ENCODE measurements at regions of chr2 and their contacts with region 1.

Region 1: GRCh38 chr2:101518578-101519492 is 43.9 kb upstream of the RFX8 start:
- DNase-seq: peak; percentile 69
- H3K4me3 Mint-ChIP-seq: peak overlapping the region; percentile 35
- H3K27ac Mint-ChIP-seq: peak overlapping the region; percentile 89
- H3K4me1 Mint-ChIP-seq: peaks cover 53% of the 10 kb centered on the region
- H3K27me3 Mint-ChIP-seq: no peaks in the 10 kb centered on the region
- CTCF ChIP-seq: peak; percentile 29

Region 2: DNA sequence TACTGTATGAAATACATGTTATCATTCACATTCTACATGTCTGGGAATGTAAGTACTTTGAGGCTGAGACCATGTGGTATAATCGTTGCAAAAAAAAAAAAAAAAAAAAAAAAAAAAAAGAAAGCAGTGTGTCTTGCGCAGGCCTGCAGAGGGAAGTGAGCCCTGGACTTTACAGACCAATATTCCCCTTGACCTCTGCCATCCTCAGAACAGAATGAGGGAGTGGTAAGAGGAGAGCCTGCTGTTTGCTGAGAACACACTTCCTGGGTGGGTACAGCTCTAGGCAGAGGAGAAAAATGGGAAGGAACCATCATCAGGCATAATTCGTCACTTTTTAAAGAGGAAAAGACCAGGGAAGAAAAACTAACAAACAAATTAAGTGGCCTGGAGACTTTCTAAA is 338.9 kb before region 1 on chr2:
- CTCF ChIA-PET with region 1: no interaction called
- intact Hi-C with region 1: no loop called
- DNase-seq: no peak
- H3K4me3 Mint-ChIP-seq: no peak overlapping the region
- H3K27ac Mint-ChIP-seq: no peak overlapping the region
- H3K4me1 Mint-ChIP-seq: peaks cover 8% of the 10 kb centered on the region
- H3K27me3 Mint-ChIP-seq: no peaks in the 10 kb centered on the region
- CTCF ChIP-seq: no peak

Region 3: GRCh38 chr2:101419096-101419663 is 99.7 kb before region 1 on chr2:
- CTCF ChIA-PET with region 1: no interaction called
- intact Hi-C with region 1: loop called (anchors 1 kb)
- DNase-seq: peak; percentile 67
- H3K4me3 Mint-ChIP-seq: no peak overlapping the region
- H3K27ac Mint-ChIP-seq: no peak overlapping the region
- H3K4me1 Mint-ChIP-seq: no peaks in the 10 kb centered on the region
- H3K27me3 Mint-ChIP-seq: no peaks in the 10 kb centered on the region
- CTCF ChIP-seq: peak; percentile 61

Region 4: DNA sequence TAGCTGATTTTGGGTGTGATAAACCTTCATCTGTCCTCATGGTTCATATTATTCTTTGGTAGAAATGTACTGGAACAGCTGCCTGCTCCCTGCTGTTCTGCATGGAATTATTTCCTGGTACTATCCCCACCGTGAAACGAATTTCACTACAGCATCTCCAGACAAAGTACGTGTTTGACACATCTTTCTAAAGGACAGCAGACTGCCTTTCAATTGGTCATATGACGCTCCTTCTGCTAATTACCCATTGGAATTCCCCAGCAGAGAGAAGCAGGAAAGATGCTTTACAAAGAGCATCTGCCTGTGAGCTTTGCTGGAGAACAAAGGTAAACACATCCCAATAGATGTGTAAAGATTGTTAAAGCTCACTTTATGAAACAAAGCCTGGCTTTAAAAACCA is 39.5 kb before region 1 on chr2:
- CTCF ChIA-PET with region 1: no interaction called
- intact Hi-C with region 1: no loop called
- DNase-seq: no peak
- H3K4me3 Mint-ChIP-seq: no peak overlapping the region
- H3K27ac Mint-ChIP-seq: no peak overlapping the region
- H3K4me1 Mint-ChIP-seq: no peaks in the 10 kb centered on the region
- H3K27me3 Mint-ChIP-seq: no peaks in the 10 kb centered on the region
- CTCF ChIP-seq: no peak

Region 5: GRCh38 chr2:101697124-101698013 is 178.5 kb after region 1 on chr2 and contains the start of gene MAP4K4:
- CTCF ChIA-PET with region 1: interaction called, 4 read pairs
- intact Hi-C with region 1: loop called (anchors 5 kb)
- DNase-seq: peak; percentile 81
- H3K4me3 Mint-ChIP-seq: no peak within 1 kb of the TSS
- H3K27ac Mint-ChIP-seq: peak within 1 kb of the TSS; percentile 86
- H3K4me1 Mint-ChIP-seq: peaks cover 31% of the 10 kb centered on the region
- H3K27me3 Mint-ChIP-seq: no peaks in the 10 kb centered on the region
- CTCF ChIP-seq: no peak
- total RNA-seq, gene MAP4K4: 136 and 151 TPM in 2 replicates

Region 6: DNA sequence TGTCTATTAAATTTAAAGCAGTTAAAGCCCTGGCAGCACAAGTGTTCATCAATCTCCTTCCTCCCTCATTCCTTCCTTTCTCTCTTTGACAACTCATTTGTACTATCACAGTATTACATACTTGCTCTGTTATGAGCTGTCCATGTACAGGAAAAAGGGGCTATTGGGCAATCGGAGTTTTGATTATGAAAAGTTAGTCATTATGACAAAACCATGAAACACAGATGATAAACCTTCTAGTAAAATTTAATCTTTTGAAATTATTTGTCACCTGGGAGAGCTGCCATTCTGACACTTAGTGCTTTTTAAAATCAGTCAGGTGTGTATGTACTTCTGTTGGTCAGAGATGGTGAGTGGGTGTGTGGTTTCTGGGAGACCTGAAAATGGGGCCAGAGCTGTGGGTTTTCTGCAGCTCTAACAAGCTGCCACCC is 218.0 kb after region 1 on chr2:
- CTCF ChIA-PET with region 1: no interaction called
- intact Hi-C with region 1: loop called (anchors 5 kb)
- DNase-seq: no peak
- H3K4me3 Mint-ChIP-seq: peak overlapping the region; percentile 45
- H3K27ac Mint-ChIP-seq: peak overlapping the region; percentile 77
- H3K4me1 Mint-ChIP-seq: peaks cover 65% of the 10 kb centered on the region
- H3K27me3 Mint-ChIP-seq: no peaks in the 10 kb centered on the region
- CTCF ChIP-seq: no peak

Region 7: GRCh38 chr2:101831351-101831865 is 312.6 kb after region 1 on chr2:
- CTCF ChIA-PET with region 1: interaction called, 12 read pairs
- intact Hi-C with region 1: loop called (anchors 1 kb)
- DNase-seq: peak; percentile 73
- H3K4me3 Mint-ChIP-seq: peak overlapping the region; percentile 30
- H3K27ac Mint-ChIP-seq: peak overlapping the region; percentile 87
- H3K4me1 Mint-ChIP-seq: peaks cover 52% of the 10 kb centered on the region
- H3K27me3 Mint-ChIP-seq: no peaks in the 10 kb centered on the region
- CTCF ChIP-seq: peak; percentile 64

Measured in Calu3 (cell line).